Breast epithelium (tissue), 4 donors: ENCODE measurements at regions of chr1 and their contacts with region 1.

Region 1: DNA sequence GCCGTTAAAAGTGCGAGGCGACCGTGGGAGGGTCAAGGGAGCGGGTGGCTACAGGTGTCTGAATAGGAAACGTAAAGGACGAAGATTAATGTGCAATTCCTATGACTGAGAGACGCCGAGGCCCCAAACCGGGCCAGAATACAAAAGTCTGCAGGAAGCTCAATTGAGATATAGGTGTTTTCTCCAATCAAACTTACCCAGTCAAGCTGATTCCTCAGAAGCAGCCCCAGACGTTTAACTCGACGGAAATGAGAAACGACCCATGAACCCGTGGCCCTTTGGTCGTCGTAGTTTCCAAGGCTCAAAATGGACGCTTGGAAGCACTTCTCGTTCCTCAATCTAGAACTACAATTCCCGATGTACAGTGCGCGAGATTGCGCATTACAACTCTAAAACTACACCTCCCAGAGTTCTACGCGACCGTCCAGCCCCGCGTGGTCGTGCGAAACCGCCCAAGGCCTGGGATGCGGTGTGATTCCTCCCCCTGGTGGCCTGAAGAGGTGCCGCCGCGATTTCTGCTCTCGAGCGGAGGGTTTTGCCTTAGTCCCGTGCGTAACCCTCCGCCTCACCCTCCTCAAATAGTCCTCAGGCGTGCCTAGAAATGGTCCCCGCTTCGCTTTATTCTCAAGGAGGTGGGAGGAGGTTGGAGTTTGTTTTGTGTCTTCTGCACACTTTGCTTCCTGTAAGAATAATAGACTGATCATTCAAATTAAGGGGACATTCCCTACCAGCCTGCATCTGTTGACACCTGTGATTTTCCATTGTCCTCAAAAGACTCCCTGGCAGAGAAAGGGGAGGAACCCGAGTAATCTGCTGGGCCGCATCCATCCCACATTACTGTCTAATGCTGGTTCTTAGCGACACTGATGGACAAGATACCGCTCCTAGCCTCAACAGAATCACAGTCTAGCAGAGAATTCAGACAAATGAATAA is at the start of gene PAFAH2:
- DNase-seq: peak; percentile 97
- H3K4me3 ChIP-seq: peak within 1 kb of the TSS; percentile 58 to 74 (median 68)
- H3K27ac ChIP-seq: peak within 1 kb of the TSS; percentile 70 to 82
- H3K4me1 ChIP-seq: peaks cover 0 to 5% of the 10 kb centered on the region in 2 donors
- H3K27me3 ChIP-seq: no peaks in the 10 kb centered on the region
- CTCF ChIP-seq: peak; percentile 99 to 100 (median 100)
- POLR2A ChIP-seq: no peak
- total RNA-seq, gene PAFAH2: 8.2 to 19.9 (median 9.8) TPM

Region 2: GRCh38 chr1:25895365-25895993 is 102.6 kb before region 1 on chr1:
- intact Hi-C with region 1: loop called (anchors 10 kb)
- DNase-seq: peak; percentile 76 to 85
- H3K4me3 ChIP-seq: no peak overlapping the region
- H3K27ac ChIP-seq: no peak overlapping the region
- H3K4me1 ChIP-seq: peaks cover 0 to 7% of the 10 kb centered on the region in 2 donors
- H3K27me3 ChIP-seq: no peaks in the 10 kb centered on the region
- CTCF ChIP-seq: peak; percentile 89 to 99 (median 95)
- POLR2A ChIP-seq: no peak